Heart left ventricle (tissue), 16 donors: ENCODE measurements at regions of chr6 and their contacts with region 1.

Region 1: DNA sequence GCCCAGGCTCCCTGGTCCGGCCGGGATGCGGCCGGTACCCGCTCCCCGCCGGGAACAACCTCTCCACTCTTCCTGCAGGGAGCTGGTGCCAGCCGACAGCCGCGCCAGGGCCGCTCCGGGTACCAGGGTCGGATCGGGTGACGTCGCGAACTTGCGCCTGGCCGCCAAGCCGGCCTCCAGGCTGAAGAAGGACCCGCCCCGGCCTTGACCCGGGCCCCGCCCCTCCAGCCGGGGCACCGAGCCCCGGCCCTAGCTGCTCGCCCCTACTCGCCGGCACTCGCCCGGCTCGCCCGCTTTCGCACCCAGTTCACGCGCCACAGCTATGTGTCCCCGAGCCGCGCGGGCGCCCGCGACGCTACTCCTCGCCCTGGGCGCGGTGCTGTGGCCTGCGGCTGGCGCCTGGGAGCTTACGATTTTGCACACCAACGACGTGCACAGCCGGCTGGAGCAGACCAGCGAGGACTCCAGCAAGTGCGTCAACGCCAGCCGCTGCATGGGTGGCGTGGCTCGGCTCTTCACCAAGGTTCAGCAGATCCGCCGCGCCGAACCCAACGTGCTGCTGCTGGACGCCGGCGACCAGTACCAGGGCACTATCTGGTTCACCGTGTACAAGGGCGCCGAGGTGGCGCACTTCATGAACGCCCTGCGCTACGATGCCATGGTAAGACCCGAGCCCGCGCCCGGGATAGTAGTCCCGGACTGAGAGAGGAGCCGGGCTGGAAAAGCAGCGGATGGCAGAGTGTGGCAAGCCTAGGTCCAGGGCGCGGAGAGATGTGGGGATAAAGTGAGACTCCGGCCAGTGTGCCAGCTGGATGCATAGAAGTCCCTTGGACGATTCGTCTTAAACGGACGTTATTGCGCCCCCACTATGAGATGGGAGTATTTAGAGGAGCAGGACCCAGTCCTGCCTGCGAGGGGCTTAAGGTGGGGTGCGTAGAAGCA is at the start of gene NT5E:
- DNase-seq: peak; percentile 66 to 82 (median 71)
- ATAC-seq: peak; percentile 62 to 95 (median 87)
- H3K4me3 ChIP-seq: peak within 1 kb of the TSS; percentile 45 to 76 (median 64)
- H3K27ac ChIP-seq: peak within 1 kb of the TSS; percentile 11 to 90 (median 78)
- H3K4me1 ChIP-seq: peaks cover 0 to 25% (median 5%) of the 10 kb centered on the region in 12 donors
- H3K27me3 ChIP-seq: peaks cover 2 to 58% (median 25%) of the 10 kb centered on the region in 9 donors
- CTCF ChIP-seq: no peak
- POLR2A ChIP-seq: no peak
- total RNA-seq, gene NT5E: 1.8 to 11.0 (median 4.8) TPM

Region 2: GRCh38 chr6:85419046-85419759 is 30.9 kb before region 1 on chr6:
- intact Hi-C with region 1: no loop called
- DNase-seq: no peak
- ATAC-seq: peak in 1 of 4 donors; percentile 18
- H3K4me3 ChIP-seq: no peak overlapping the region
- H3K27ac ChIP-seq: no peak overlapping the region
- H3K4me1 ChIP-seq: peaks cover 0 to 14% (median 0%) of the 10 kb centered on the region in 12 donors
- H3K27me3 ChIP-seq: no peaks in the 10 kb centered on the region
- CTCF ChIP-seq: no peak
- POLR2A ChIP-seq: no peak

Region 3: GRCh38 chr6:85460921-85461797 is 11.1 kb after region 1 on chr6:
- intact Hi-C with region 1: no loop called
- DNase-seq: no peak
- ATAC-seq: peak in 3 of 4 donors; percentile 27 to 45 (median 44)
- H3K4me3 ChIP-seq: no peak overlapping the region
- H3K27ac ChIP-seq: peak overlapping the region in 9 of 12 donors; percentile 20 to 73 (median 60)
- H3K4me1 ChIP-seq: peaks cover 0 to 61% (median 22%) of the 10 kb centered on the region in 12 donors
- H3K27me3 ChIP-seq: no peaks in the 10 kb centered on the region
- CTCF ChIP-seq: no peak
- POLR2A ChIP-seq: no peak

Region 4: DNA sequence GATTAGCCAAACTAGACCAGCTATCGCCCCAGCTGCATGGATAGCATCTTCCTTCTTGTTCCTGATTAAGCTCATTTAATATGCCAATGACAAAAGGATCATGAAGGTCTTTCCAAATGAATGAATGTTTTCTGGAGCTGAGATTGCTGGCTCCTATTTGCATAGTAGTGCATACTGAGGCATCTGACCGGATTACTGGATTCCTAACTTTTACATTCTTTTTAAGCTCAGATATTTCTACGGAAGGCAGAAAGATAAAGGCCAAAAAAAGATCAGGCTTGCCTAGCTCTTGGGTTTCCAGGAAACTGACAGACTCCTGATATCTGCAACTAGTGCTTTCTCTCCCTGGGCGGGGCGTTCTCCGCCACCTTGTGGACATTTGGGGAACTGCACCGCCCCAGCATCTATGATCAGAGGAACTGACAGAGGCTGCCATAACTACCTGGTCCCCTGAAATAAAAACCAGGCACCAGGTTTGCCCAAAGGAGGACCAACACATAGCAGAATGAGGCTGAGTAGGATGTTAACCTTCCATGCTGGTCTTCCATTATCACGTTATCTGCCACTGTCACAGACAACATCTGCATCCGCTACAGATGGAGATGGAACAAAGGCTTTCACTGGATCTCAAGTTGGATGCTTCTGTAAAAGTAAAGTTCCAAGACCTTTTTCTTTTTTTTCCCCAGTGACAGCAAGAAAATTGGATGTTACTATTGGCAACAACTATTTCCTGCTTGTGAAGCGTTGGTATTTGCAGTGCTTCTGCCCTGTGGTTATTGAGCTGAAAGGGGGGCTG is 33.0 kb after region 1 on chr6:
- intact Hi-C with region 1: loop called in 1 of 10 experiments (anchors 2 kb)
- DNase-seq: peak; percentile 64 to 88 (median 69)
- ATAC-seq: peak; percentile 70 to 94 (median 88)
- H3K4me3 ChIP-seq: peak overlapping the region in 1 of 12 donors; percentile 8
- H3K27ac ChIP-seq: peak overlapping the region in 4 of 12 donors; percentile 0 to 49 (median 29)
- H3K4me1 ChIP-seq: peaks cover 0 to 20% (median 2%) of the 10 kb centered on the region in 12 donors
- H3K27me3 ChIP-seq: no peaks in the 10 kb centered on the region
- CTCF ChIP-seq: peak; percentile 97 to 100 (median 100)
- POLR2A ChIP-seq: no peak